ENCODE measurements at regions of chr1 and their contacts with region 1.

Region 1: GRCh38 chr1:103561643-103562395 is 9.6 kb upstream of the AMY2B start:
- DNase-seq: no peak
- H3K4me3 ChIP-seq: no peak overlapping the region
- H3K27ac ChIP-seq: peak overlapping the region; percentile 19 to 35
- H3K4me1 ChIP-seq: peaks cover 0 to 8% of the 10 kb centered on the region in 2 donors
- H3K27me3 ChIP-seq: no peaks in the 10 kb centered on the region
- CTCF ChIP-seq: no peak

Region 2: DNA sequence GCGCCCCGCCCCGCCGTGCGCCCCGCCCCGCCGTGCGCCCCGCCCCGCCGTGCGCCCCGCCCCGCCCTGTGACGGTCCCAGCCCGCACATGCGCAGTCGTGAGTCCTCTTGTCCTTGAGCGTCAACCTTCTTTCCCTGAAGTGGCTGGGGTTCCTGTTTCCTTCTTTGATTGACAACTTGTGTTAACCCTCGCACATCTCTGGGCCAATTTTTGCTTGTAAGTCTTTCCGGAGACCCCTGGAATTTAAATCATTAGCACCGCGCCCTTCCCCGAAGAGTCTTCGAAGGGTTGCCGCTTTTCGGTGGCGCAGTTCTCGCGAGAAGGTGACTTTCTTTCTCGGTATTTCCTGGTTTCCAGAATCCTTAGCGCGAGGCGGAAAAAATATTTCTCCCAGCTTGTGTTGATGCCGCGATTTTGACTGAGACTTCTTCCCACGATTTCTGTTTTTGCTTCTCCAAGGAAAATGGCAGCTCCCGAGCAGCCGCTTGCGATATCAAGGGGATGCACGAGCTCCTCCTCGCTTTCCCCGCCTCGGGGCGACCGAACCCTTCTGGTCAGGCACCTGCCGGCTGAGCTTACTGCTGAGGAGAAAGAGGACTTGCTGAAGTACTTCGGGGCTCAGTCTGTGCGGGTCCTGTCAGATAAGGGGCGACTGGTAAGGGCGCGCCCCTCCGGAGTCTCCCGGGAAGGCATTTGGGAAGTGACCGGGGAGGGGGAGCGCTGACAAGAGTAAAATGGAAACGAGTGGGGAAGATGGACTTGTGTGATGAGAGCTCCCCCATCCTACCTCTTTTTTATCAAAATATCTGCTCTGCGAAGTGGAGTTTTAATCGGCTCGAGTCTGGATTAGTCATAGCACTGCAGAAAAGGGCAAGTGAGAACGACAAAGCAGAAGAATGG is 36.0 kb before region 1 on chr1 and contains the start of gene RNPC3:
- intact Hi-C with region 1: loop called (anchors 5 kb)
- DNase-seq: peak; percentile 36 to 93
- H3K4me3 ChIP-seq: peak within 1 kb of the TSS; percentile 87 to 89
- H3K27ac ChIP-seq: peak within 1 kb of the TSS; percentile 93
- H3K4me1 ChIP-seq: peaks cover 0 to 26% of the 10 kb centered on the region in 2 donors
- H3K27me3 ChIP-seq: no peaks in the 10 kb centered on the region
- CTCF ChIP-seq: no peak
- total RNA-seq, gene RNPC3: 3.9 TPM

Region 3: DNA sequence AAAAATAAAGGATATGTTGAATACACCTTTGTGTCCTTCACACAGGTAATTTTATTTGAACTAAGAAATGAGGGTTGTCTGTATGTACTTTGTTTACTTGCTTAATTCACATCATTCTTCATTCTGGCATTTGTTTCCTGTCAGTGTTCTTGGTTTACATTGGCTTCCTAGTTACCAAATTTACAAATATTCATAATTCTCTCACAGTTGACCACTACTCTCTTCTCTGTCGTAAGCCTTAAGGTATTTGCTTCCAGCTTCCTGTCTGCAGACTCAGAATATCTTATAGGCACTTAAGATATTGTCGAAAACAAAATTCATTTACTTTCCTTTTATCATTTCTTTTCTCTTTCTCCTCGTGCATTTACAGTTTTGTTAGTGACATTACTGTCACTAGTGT is 20.4 kb before region 1 on chr1:
- intact Hi-C with region 1: no loop called
- DNase-seq: no peak
- H3K4me3 ChIP-seq: no peak overlapping the region
- H3K27ac ChIP-seq: no peak overlapping the region
- H3K4me1 ChIP-seq: no peaks in the 10 kb centered on the region
- H3K27me3 ChIP-seq: no peaks in the 10 kb centered on the region
- CTCF ChIP-seq: no peak

Measured in ascending aorta (tissue), 2 donors.